AG04450 (cell line): ENCODE measurements at regions of chr10 and their contacts with region 1.

Region 1: DNA sequence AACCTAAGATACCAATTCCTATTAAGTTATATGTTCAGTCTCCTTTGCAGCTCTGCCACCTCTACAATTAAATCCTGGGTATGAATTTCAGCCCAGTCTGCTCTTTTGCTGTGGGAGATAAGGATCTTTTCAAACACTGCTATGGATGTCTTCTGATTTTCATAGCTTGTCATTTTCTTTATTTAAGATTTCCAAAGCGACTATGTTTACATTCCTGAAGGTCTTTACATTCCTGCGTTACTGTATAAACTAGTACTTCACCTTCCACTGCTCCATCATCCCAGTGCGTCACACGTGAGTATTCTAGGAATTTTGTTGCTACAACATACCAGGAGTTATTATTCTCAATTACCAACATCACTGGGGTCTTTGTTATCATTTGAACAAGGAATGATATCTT is 944.6 kb downstream of the SORCS3 start:
- DNase-seq: peak; percentile 33
- H3K4me3 ChIP-seq: no peak overlapping the region
- H3K27ac ChIP-seq: no peak overlapping the region
- H3K27me3 ChIP-seq: no peaks in the 10 kb centered on the region
- CTCF ChIP-seq: no peak

Region 2: DNA sequence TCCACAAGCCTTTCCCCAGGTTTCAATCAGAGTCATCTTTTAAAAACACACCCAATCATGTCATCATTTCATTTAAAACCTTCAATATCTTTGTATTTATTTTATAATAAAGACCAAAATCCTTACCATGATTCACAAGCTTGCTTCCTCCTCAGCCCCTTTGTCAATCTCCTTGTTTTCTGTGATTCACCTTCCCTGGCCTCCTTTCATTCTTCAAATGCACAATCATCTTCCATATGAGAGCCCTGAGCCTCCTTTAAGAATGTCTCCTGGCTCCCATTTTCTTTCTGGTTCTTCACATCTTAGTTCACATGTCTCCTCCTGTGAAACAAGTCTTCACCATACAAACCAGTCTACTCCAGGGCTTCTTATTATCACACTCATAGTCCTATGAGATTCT is 40.6 kb before region 1 on chr10:
- CTCF ChIA-PET with region 1: no interaction called
- POLR2A ChIA-PET with region 1: no interaction called
- DNase-seq: no peak
- H3K4me3 ChIP-seq: no peak overlapping the region
- H3K27ac ChIP-seq: no peak overlapping the region
- H3K27me3 ChIP-seq: no peaks in the 10 kb centered on the region
- CTCF ChIP-seq: no peak

Region 3: DNA sequence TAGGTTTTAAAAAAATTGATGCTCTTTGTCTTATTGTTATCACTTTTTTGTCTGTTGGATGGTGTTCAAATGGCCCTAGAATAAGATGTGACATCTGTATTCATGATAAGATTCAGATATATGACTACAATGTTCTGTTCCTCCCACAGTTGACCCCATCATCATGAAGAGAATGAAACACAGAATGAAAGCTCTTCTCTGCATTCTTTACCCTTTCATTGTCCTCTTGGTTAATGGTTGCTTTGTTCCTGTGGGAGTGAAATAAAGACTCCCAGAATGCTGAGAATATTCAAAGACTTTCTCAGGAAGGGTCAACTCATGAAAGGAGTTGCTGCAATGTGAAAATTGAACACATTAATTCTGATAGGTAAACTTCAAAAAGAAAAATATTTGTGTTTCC is 71.1 kb after region 1 on chr10:
- CTCF ChIA-PET with region 1: no interaction called
- POLR2A ChIA-PET with region 1: interaction called, 10 read pairs
- DNase-seq: no peak
- H3K4me3 ChIP-seq: no peak overlapping the region
- H3K27ac ChIP-seq: no peak overlapping the region
- H3K27me3 ChIP-seq: no peaks in the 10 kb centered on the region
- CTCF ChIP-seq: no peak

Region 4: DNA sequence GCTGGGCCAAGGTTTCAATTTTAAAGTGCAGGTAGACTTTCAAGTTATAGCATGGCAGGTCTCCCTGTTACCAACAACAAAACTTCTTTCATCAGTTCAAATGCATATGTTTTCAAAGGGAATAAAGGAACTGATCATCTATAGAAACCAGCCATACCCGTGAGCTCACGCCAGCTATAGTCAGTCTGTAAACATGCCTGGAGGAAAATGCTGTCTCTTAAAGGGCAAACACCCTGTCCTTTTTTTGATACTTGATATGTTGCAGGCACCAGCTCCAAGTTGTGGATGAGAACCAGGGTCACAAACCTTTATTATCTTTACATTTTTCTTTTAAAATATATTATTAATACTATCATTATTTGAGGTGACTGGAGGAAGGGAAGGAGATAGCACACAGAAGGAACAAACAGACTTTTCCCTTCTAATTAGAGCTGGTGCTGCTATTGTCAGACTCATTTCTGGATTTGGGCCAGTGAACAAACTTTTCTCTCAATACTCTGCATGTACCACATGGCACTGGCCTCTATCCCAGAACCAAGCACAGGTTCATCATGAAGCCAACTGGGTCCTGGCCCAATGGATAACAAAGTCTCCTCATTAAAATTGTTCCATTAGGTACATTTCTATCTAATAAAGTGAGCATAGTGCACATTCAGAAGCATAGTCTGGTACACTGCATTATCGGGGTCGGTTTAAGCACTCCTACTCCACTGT is 157.8 kb after region 1 on chr10:
- CTCF ChIA-PET with region 1: interaction called, 10 read pairs
- POLR2A ChIA-PET with region 1: no interaction called
- DNase-seq: no peak
- H3K4me3 ChIP-seq: no peak overlapping the region
- H3K27ac ChIP-seq: no peak overlapping the region
- H3K27me3 ChIP-seq: no peaks in the 10 kb centered on the region
- CTCF ChIP-seq: no peak